ENCODE measurements at regions of chr7 and their contacts with region 1.

Region 1: DNA sequence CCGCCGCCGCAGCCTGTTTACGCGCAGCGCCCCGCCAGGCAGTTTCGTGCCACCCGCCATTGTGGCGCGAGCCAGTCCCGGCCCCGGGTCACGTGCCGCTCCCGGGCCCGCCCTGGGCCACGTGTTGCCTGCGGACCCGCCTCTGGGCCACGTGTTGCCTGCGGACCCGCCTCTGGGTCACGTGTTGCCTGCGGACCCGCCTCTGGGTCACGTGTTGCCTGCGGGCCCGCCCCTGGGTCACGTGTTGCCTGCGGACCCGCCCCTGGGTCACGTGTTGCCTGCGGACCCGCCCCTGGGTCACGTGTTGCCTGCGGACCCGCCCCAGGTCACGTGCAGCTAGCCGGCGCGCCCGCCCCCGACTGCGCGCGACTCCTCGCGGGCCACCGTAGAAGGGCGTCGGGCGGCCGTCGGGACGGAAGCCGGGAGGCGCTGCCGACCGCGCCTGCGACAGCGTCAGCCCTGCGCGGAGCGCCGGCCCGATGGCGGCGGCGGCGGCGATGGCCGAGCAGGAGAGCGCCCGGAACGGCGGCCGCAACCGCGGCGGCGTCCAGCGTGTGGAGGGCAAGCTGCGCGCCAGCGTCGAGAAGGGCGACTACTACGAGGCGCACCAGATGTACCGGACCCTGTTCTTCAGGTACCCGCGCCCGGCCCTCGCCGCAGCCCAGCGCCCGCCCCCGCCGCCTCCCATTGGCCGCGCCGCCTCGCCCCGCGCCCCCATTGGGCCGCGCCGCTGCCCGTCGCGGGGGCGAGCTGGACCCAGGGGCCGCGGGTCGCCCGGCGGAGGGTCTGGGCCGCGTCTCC is at the start of gene GET4:
- DNase-seq: peak; percentile 96 to 98
- ATAC-seq: peak; percentile 67
- H3K4me3 ChIP-seq: peak within 1 kb of the TSS; percentile 80 to 91 (median 86)
- H3K27ac ChIP-seq: peak within 1 kb of the TSS; percentile 94 to 97 (median 96)
- H3K4me1 ChIP-seq: peaks cover 61 to 62% of the 10 kb centered on the region in 2 donors
- H3K27me3 ChIP-seq: no peaks in the 10 kb centered on the region
- CTCF ChIP-seq: peak in 2 of 5 experiments; percentile 63 to 69
- POLR2A ChIP-seq: peak; percentile 93 to 97
- total RNA-seq, gene GET4: 24.6 to 40.8 (median 30.0) TPM

Region 2: DNA sequence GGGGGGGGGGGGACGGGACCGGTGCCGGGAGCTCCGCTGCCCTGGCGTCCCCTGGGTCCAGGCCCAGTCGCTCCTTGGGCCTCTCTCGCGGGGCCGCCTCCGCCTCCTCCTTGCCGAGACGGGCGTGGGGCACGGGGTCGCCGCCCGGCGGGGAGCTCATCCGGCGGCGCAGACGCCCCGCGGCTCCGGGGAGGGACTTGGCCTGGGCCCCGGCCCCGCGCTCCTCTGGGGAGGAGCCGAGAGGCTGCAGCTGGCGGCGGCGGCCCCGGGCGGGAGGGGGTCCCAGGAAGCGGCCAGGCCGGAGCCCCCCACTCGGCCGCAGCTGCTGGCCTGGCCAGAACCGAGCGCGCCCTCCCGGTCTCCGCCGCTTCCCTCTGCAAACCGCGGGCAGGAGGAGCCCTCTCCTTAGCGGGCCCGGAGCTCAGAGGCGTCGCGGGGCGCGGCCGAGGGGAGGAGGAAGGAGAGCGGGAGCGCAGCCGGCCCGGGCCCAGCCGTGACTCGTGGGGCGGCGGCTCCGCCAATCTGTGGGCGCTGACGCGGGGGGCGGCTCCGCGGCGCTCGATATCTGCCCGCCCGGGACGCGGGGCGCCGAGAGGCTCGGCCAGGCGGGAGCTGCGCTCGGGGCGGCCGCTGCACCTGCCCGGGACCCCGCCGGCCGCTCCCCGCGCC is 684.3 kb before region 1 on chr7 and contains the start of gene FAM20C:
- in situ Hi-C with region 1: no loop called
- intact Hi-C with region 1: loop called (anchors 5 kb)
- DNase-seq: peak; percentile 80 to 83
- ATAC-seq: peak; percentile 67 to 68
- H3K4me3 ChIP-seq: peak within 1 kb of the TSS; percentile 61 to 89 (median 68)
- H3K27ac ChIP-seq: peak within 1 kb of the TSS; percentile 85 to 98 (median 91)
- H3K4me1 ChIP-seq: peaks cover 51 to 52% of the 10 kb centered on the region in 2 donors
- H3K27me3 ChIP-seq: no peaks in the 10 kb centered on the region
- CTCF ChIP-seq: no peak
- POLR2A ChIP-seq: peak; percentile 94 to 96
- total RNA-seq, gene FAM20C: 9.6 to 35.3 (median 18.6) TPM

Region 3: DNA sequence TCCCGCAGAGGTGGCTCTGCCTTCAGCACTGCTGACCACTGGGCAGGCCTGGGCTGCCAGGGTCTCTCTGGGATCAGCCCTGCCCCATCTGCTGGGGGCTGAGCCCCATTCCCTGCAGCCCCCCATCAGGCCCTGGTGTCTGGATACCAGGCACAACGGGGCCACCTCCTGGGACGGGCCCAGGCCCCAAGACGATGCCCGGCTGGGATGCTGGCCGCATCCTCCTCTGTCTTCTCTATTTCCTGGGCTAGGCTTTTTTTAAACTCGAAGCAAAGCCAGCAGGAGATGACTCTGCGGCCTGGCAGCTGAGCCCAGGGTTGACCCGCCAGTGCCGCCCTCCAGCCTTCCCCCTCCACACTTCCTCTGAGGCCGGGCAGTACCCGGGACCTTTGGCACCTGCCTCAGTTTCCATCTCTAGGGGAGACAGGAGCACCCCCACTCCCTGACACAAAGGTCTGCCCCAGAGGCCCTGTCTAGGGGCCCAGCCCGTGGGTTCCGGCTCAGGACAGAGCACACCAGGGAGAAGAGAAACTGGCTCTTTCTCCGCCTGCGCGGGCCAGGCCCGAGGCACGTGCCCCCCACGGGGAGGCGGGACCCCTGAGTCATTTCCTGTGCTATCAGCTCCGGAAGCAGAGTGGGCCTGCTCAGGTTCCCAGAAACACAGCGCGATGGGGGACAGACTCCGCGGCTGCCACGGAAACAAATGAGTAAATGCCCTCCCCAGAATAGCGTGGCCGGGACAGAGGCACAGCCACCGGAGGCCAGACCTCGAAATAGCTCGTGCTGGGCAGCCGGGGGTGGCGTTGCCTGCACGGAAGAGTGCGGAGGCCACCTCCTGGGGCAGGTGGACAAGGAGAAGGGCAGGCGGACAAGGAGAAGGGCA is 272.1 kb before region 1 on chr7:
- in situ Hi-C with region 1: no loop called
- intact Hi-C with region 1: loop called (anchors 10 kb)
- DNase-seq: peak; percentile 68 to 83
- ATAC-seq: peak; percentile 88 to 89
- H3K4me3 ChIP-seq: peak overlapping the region; percentile 30 to 49 (median 38)
- H3K27ac ChIP-seq: peak overlapping the region; percentile 89 to 94 (median 90)
- H3K4me1 ChIP-seq: peaks cover 21% of the 10 kb centered on the region in 2 donors
- H3K27me3 ChIP-seq: no peaks in the 10 kb centered on the region
- CTCF ChIP-seq: peak in 1 of 5 experiments; percentile 6
- POLR2A ChIP-seq: peak; percentile 66 to 70

Region 4: DNA sequence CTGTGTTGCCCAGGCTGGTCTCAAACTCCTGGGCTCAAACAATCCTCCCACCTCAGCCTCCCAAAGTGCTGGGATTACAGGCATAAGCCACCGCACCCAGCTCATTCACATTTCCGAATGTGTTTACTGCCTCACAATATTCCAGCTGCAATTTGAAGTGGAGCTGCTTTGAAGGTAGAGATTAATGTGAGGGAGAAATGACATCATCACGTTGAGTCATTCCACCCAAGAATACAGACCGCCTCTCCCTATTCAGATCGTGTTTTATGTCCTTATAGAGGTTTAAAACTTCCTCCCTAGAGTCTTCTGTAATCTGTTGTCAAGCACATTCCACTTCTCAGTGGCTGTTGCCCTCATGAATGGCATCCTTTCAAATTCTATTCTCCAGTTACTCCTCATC is 256.3 kb before region 1 on chr7:
- in situ Hi-C with region 1: no loop called
- intact Hi-C with region 1: no loop called
- DNase-seq: no peak
- ATAC-seq: no peak
- H3K4me3 ChIP-seq: no peak overlapping the region
- H3K27ac ChIP-seq: no peak overlapping the region
- H3K4me1 ChIP-seq: no peaks in the 10 kb centered on the region
- H3K27me3 ChIP-seq: no peaks in the 10 kb centered on the region
- CTCF ChIP-seq: no peak
- POLR2A ChIP-seq: no peak

Region 5: DNA sequence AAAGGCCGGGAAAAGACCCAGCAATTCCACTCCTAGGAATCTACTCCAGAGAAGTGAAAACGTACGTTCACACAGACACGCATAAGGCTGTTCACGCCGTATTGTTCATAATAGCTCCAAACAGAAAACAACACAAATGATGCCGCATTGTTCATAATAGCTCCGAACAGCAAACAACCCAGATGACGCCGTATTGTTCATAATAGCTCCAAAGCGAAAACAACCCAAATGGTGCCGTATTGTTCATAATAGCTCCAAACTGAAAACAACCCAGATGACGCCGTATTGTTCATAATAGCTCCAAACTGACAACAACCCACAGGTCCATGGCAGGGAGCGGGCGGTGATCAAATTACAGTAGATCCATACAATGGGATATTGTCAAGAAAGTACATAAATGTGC is 235.1 kb before region 1 on chr7:
- in situ Hi-C with region 1: no loop called
- intact Hi-C with region 1: no loop called
- DNase-seq: no peak
- ATAC-seq: peak in 1 of 2 donors; percentile 56
- H3K4me3 ChIP-seq: peak overlapping the region in 3 of 4 donors; percentile 20 to 23 (median 22)
- H3K27ac ChIP-seq: no peak overlapping the region
- H3K4me1 ChIP-seq: no peaks in the 10 kb centered on the region
- H3K27me3 ChIP-seq: no peaks in the 10 kb centered on the region
- CTCF ChIP-seq: no peak
- POLR2A ChIP-seq: no peak

Region 6: GRCh38 chr7:816300-816750 is 60.0 kb before region 1 on chr7:
- in situ Hi-C with region 1: loop called in 2 of 4 experiments (anchors 10 kb)
- intact Hi-C with region 1: loop called (anchors 1 kb)
- DNase-seq: peak; percentile 97 to 98
- ATAC-seq: peak; percentile 73 to 76
- H3K4me3 ChIP-seq: peak overlapping the region; percentile 38 to 69 (median 49)
- H3K27ac ChIP-seq: peak overlapping the region; percentile 94 to 99 (median 96)
- H3K4me1 ChIP-seq: peaks cover 63 to 77% of the 10 kb centered on the region in 2 donors
- H3K27me3 ChIP-seq: no peaks in the 10 kb centered on the region
- CTCF ChIP-seq: no peak
- POLR2A ChIP-seq: peak; percentile 87

Region 7: GRCh38 chr7:835485-836401 is 40.6 kb before region 1 on chr7:
- in situ Hi-C with region 1: no loop called
- intact Hi-C with region 1: loop called (anchors 1 kb)
- DNase-seq: no peak
- ATAC-seq: no peak
- H3K4me3 ChIP-seq: no peak overlapping the region
- H3K27ac ChIP-seq: peak overlapping the region; percentile 91 to 96 (median 94)
- H3K4me1 ChIP-seq: peaks cover 65 to 69% of the 10 kb centered on the region in 2 donors
- H3K27me3 ChIP-seq: no peaks in the 10 kb centered on the region
- CTCF ChIP-seq: no peak
- POLR2A ChIP-seq: no peak

Region 8: DNA sequence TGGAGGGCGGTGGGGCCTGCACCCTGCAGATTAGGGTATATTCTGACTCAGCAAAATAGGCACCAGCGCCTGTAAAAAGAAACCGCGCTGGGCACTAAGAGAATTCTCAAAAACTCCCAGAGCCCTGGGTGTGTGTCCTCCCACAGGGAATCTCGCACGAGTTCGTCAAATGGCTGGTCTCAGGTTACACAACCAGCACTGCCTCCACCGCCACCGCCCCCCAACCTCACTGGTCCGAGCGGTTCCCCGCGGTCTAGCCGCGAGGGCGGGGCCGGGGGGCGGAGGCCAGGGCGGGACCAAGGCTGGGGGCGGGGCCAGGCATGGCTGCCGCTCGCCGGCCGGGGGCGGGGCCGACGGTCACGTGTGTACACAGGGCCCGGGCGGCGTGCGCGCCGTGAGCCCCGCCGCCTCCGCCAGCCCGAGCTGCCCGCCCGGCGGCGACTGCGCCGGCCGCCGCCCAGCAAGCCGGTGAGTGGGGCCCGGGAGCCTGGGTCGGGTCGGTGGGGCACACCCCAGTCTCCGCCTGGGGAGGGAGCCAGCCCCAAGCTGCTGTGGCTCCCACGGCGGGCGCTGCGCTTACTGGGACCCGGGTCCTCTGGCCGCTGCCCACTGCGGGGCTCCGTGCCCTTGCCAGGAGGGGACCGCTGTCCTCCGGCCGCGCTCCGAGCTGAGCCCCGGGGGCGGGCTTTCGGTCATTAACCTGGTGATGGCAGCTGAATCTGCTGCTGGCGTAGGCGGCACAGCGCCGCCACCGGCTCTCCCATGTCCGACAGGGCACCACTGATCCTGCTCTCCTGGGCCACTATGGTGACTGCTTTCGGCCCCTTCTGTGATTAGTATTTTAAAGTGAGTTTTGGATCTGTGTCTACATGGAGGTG is 168.1 kb after region 1 on chr7 and contains the start of gene GPR146:
- in situ Hi-C with region 1: no loop called
- intact Hi-C with region 1: loop called (anchors 5 kb)
- DNase-seq: peak; percentile 97
- ATAC-seq: peak; percentile 90 to 92
- H3K4me3 ChIP-seq: peak within 1 kb of the TSS; percentile 65 to 95 (median 78)
- H3K27ac ChIP-seq: peak within 1 kb of the TSS; percentile 92 to 97 (median 96)
- H3K4me1 ChIP-seq: peaks cover 44 to 49% of the 10 kb centered on the region in 2 donors
- H3K27me3 ChIP-seq: no peaks in the 10 kb centered on the region
- CTCF ChIP-seq: peak; percentile 67 to 81 (median 73)
- POLR2A ChIP-seq: peak; percentile 67 to 77
- total RNA-seq, gene GPR146: 23.3 to 43.8 (median 29.5) TPM

Measured in gastrocnemius medialis (tissue), 4 donors.